Motor neuron (in vitro differentiated cells): ENCODE measurements at regions of chr17 and their contacts with region 1.

Region 1: DNA sequence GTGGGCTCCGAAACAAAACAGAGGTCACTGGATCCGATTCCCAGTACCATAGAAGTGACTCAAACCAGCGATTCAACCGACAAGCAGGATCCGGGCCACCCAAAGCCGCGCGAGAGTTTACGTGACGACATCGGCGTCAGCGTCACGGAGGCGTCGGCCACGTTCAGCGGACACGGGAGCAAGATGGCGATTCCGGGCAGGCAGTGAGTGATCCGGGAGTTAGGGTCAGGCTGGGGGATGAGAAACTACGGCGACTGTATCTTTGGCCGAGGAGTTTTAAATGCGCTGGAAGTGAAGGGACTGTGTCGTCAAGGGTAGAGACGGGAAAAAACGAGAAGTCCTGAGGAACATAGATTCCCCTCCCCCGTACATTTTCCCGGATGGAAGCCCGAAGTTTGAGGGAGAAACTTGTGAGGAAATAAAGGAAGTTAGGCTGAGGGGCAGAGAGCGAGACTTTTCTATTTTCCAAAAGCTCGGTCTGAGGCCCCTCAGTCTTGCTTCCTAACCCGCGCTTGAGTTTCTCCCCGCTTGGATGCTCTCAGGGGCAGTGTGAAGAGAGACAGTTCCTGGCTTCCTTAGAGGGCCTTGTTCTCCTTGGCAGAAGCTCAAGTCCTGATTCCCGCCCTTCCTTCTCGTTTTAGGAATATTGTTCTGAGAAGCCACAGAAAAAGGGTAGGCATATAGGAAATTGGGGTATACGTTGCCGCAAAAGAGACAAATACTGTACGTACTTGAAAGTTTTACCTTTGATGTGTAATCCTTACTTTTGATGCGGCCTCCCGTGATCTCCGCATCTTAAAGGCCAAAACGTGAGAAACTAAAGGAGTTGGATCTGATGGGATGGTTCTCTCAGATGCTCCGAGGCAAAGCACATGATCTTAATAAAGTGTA is at the start of gene NSRP1:
- ATAC-seq: peak; percentile 94 to 99 (median 97)
- H3K4me3 ChIP-seq: peak within 1 kb of the TSS; percentile 64 to 86 (median 78)
- H3K27ac ChIP-seq: peak within 1 kb of the TSS; percentile 96 to 98
- H3K4me1 ChIP-seq: peaks cover 0 to 10% of the 10 kb centered on the region in 2 donors
- total RNA-seq, gene NSRP1: 6.3 to 48.1 (median 17.3) TPM

Region 2: DNA sequence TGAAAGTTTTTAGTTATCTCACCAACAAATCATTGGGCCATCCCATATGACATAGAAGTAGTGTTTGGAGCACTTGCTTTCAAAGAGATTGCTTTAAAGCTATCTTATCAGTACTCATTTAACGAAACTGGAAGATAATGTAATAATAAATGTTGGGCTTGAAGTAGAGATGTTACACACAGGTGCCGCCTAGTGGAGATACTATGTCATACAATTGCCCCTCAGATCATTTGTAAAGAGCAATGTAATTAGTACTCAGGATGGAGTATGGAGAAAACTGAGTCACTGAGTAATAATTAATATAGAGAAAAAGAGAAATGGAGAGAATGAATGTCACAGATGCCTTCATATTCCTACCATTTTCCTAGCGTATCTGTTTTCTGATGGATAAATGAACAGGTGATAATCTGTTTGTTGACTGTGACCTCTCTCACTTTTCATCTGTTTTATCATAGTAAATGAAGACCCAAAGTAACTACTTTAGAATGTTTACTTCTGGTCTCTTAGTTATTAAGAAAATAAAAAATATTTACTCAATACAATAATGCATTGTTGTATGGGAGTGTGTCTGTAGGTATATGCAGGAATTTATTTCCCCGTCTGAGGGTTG is 95.1 kb before region 1 on chr17:
- in situ Hi-C with region 1: loop called in 1 of 9 experiments (anchors 25 kb)
- ATAC-seq: peak in 3 of 8 experiments; percentile 52 to 60 (median 58)
- H3K4me3 ChIP-seq: no peak overlapping the region
- H3K27ac ChIP-seq: no peak overlapping the region
- H3K4me1 ChIP-seq: no peaks in the 10 kb centered on the region

Region 3: GRCh38 chr17:30291543-30292285 is 174.8 kb after region 1 on chr17 and contains the start of gene BLMH:
- in situ Hi-C with region 1: loop called in 3 of 9 experiments (anchors 25 kb)
- ATAC-seq: peak; percentile 84 to 95 (median 90)
- H3K4me3 ChIP-seq: peak within 1 kb of the TSS; percentile 72 to 97 (median 93)
- H3K27ac ChIP-seq: peak within 1 kb of the TSS in 1 of 2 donors; percentile 34
- H3K4me1 ChIP-seq: peaks cover 6 to 9% of the 10 kb centered on the region in 2 donors
- total RNA-seq, gene BLMH: 21.9 to 69.2 (median 32.5) TPM